CD4-positive, alpha-beta memory T cell (primary cell): ENCODE measurements at regions of chrX and their contacts with region 1.

Region 1: DNA sequence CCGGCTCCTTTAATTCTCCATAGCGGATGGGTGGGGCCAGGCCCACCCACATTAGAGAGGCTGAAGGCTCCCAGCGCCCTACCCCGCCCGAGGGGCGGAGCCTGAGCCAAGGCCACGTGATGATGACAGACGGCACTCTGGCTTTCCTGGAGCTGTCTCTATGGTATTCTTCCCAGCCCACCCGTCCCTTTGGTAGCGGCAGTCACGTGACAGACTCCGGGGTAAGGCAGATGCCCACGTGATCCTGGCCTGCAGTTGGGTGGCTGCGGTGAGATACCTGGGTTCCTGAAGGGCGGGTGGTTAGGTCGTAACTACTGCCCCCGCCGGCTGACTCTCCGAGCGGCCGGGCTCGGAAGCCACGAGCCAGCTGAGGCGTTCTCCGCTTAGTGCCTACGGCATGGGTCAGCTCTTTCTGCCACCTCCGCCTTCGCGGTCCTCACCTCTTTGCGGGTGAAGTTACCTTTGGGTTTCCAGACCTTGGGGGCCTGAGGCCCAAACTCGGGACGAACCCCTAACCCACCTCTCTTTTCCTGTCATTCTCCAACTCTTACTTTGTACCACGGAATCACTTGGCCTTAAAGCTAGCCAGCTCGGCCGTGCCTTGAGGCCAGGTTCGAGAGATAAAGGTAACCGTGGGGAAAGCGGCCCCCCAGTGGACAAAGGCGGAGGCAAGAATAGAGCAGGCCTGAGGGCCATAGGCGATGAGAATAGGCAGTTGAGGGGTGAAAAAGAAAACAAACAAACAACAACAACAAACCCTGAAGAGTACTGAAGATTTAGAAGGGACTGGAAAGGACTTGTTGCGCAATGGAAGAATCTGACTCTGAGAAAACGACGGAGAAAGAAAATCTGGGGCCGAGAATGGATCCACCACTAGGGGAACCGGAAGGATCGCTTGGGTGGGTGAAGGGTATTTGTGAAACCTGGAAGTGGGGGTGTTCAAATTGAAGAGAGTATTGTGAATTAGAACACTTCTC is at the start of gene RRAGB:
- DNase-seq: peak; percentile 86 to 95 (median 90)
- H3K4me3 ChIP-seq: peak within 1 kb of the TSS; percentile 61 to 76
- H3K4me3 Mint-ChIP-seq: peak within 1 kb of the TSS; percentile 72 to 92 (median 86)
- H3K27ac ChIP-seq: peak within 1 kb of the TSS; percentile 80
- H3K27ac Mint-ChIP-seq: peak within 1 kb of the TSS; percentile 65 to 98 (median 94)
- H3K4me1 ChIP-seq: peaks cover 32% of the 10 kb centered on the region
- H3K4me1 Mint-ChIP-seq: peaks cover 18 to 44% (median 20%) of the 10 kb centered on the region in 4 donors
- H3K27me3 ChIP-seq: no peaks in the 10 kb centered on the region
- H3K27me3 Mint-ChIP-seq: no peaks in the 10 kb centered on the region
- total RNA-seq, gene RRAGB: 9.8 to 13.1 TPM

Region 2: DNA sequence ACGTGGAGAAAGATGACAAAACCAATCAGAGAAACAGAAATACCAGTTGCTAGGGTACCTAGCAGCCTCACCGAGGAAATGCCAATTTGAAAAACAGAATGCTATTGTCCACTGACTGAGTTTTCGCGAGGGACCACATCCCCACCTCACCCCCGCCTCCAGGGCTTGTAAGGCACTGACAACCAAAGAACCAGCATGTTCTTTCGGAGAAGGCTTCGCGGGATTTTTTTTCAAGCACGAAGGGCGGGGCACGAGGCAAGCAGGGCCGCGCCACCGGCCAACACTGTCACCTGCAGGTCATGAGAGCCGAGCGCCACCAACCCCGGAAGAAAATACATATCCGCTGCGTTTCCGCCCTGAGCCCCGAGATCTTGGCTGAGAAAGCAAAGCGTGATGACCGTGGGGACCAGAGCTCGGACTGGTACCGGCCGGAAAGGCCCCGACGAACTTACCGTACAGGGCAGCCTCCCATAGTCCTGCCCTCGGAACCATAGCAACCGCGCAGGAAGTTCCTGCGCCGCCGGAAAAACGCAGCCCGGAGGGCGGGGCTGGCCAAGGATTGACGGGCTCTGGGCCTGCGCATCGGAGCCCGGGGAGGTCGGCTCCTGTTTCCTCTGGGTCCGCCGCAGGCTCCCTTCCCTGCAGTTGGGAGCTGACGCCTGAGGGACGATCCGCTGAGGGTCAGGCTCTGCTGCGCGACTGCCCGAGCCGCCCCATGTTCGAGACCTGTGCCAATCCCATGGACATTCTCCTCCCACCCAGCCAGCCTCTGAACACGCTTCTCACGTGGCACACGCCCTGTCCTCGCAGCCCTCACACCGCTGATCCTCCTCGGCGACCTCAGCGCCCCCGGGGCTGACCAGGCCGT is 556.9 kb before region 1 on chrX:
- CTCF ChIA-PET with region 1: no interaction called
- POLR2A ChIA-PET with region 1: interaction called, 7 read pairs
- intact Hi-C with region 1: loop called (anchors 1 kb)
- DNase-seq: peak; percentile 90 to 94 (median 91)
- H3K4me3 ChIP-seq: peak overlapping the region; percentile 39 to 80
- H3K4me3 Mint-ChIP-seq: peak overlapping the region; percentile 85 to 94 (median 92)
- H3K27ac ChIP-seq: peak overlapping the region; percentile 92
- H3K27ac Mint-ChIP-seq: peak overlapping the region; percentile 93 to 100 (median 98)
- H3K4me1 ChIP-seq: peaks cover 17% of the 10 kb centered on the region
- H3K4me1 Mint-ChIP-seq: peaks cover 4 to 23% (median 10%) of the 10 kb centered on the region in 4 donors
- H3K27me3 ChIP-seq: no peaks in the 10 kb centered on the region
- H3K27me3 Mint-ChIP-seq: no peaks in the 10 kb centered on the region

Region 3: DNA sequence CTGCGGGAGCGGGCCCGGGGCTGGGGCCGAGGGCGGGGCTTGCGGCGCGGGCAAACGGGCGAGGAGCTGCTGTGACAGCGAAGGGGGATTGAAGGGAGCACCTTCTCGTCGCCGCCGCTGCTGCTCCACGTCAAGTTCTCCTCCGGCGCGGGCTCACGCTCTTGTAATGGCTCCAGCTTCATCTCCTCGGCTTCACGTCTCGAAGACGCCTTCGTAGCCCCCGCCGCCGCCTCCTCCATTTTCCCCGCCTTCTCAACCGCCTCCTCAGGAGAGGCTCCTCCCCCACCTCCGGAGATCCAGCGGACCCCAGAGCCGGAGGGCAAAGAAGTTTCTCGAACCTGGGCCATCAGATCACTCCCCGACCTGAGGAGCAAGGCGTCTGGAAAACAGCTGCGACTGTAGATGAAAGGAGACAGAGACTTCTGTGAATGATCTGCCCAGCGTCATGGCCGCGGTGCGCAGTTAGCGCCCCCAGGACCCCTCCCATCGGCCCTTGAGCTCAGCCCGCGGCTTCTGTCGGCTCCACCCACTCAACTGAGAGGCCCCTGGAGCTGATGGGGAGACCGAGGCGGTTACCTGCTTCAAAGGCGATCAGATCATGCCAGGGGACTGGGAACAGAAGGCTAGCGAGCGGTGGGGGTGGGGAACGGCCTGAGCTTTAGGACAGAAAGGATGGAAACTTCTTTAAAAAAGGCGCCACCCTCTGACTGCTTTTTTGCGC is 229.1 kb before region 1 on chrX:
- CTCF ChIA-PET with region 1: interaction called, 16 read pairs
- POLR2A ChIA-PET with region 1: interaction called, 34 read pairs
- intact Hi-C with region 1: no loop called
- DNase-seq: peak; percentile 66 to 74 (median 71)
- H3K4me3 ChIP-seq: peak overlapping the region; percentile 52 to 86
- H3K4me3 Mint-ChIP-seq: peak overlapping the region; percentile 93 to 97 (median 94)
- H3K27ac ChIP-seq: peak overlapping the region; percentile 83
- H3K27ac Mint-ChIP-seq: peak overlapping the region; percentile 93 to 98 (median 95)
- H3K4me1 ChIP-seq: peaks cover 10% of the 10 kb centered on the region
- H3K4me1 Mint-ChIP-seq: peaks cover 4 to 18% (median 12%) of the 10 kb centered on the region in 4 donors
- H3K27me3 ChIP-seq: no peaks in the 10 kb centered on the region
- H3K27me3 Mint-ChIP-seq: no peaks in the 10 kb centered on the region

Region 4: GRCh38 chrX:55907968-55908607 is 190.3 kb after region 1 on chrX:
- CTCF ChIA-PET with region 1: interaction called, 5 read pairs
- POLR2A ChIA-PET with region 1: interaction called, 6 read pairs
- intact Hi-C with region 1: loop called (anchors 2 kb)
- DNase-seq: peak; percentile 36 to 43 (median 39)
- H3K4me3 ChIP-seq: peak overlapping the region; percentile 47 to 78
- H3K4me3 Mint-ChIP-seq: peak overlapping the region; percentile 90 to 98 (median 92)
- H3K27ac ChIP-seq: peak overlapping the region; percentile 44
- H3K27ac Mint-ChIP-seq: peak overlapping the region; percentile 59 to 86 (median 73)
- H3K4me1 ChIP-seq: peaks cover 10% of the 10 kb centered on the region
- H3K4me1 Mint-ChIP-seq: peaks cover 8 to 24% (median 13%) of the 10 kb centered on the region in 4 donors
- H3K27me3 ChIP-seq: no peaks in the 10 kb centered on the region
- H3K27me3 Mint-ChIP-seq: no peaks in the 10 kb centered on the region

Region 5: DNA sequence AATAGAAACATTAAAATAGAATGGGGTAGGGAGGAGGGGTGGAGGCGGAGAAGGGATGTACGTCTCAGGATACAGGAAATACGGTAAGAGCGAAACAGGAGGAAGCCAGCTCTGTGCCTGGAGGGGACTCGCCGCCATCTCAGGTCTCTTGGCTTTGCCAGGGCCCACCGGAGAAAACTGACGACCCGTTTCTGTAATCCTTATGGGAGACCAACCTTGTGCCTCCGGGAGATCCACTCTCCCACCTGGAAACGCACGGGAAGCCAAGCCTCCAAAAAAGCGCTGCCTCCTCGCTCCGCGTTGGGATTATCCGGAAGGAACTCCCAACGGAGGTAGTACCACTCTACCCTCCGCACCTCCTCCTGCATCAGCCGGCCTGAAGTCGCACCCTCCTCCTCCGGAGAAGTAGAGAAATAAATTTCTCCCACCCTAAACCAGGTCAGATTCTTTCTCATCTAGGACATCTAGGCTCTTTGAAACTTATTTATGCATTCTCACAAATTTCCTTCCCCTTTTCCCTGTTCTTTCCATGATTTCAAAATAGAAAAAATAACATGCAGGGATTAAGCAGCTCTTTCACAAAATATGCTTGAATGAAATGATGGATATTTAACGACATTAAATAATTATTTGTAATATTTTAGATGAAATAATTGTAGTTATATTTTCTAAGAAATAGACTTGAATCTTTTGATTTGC is 1011.5 kb after region 1 on chrX and contains the start of gene NBDY:
- CTCF ChIA-PET with region 1: interaction called, 3 read pairs
- POLR2A ChIA-PET with region 1: no interaction called
- intact Hi-C with region 1: loop called (anchors 5 kb)
- DNase-seq: peak; percentile 36 to 62 (median 48)
- H3K4me3 ChIP-seq: peak within 1 kb of the TSS; percentile 36 to 76
- H3K4me3 Mint-ChIP-seq: peak within 1 kb of the TSS; percentile 92 to 97 (median 94)
- H3K27ac ChIP-seq: peak within 1 kb of the TSS; percentile 78
- H3K27ac Mint-ChIP-seq: peak within 1 kb of the TSS; percentile 88 to 97 (median 95)
- H3K4me1 ChIP-seq: peaks cover 28% of the 10 kb centered on the region
- H3K4me1 Mint-ChIP-seq: peaks cover 13 to 51% (median 17%) of the 10 kb centered on the region in 4 donors
- H3K27me3 ChIP-seq: no peaks in the 10 kb centered on the region
- H3K27me3 Mint-ChIP-seq: no peaks in the 10 kb centered on the region
- total RNA-seq, gene NBDY: 29.3 to 34.3 TPM